ENCODE measurements at regions of chr5 and their contacts with region 1.

Region 1: GRCh38 chr5:139774980-139775661 is 20.5 kb upstream of the PSD2 start:
- DNase-seq: peak; percentile 85
- ATAC-seq: peak; percentile 97
- H3K4me3 Mint-ChIP-seq: no peak overlapping the region
- H3K27ac Mint-ChIP-seq: no peak overlapping the region
- H3K4me1 Mint-ChIP-seq: peaks cover 4% of the 10 kb centered on the region
- H3K27me3 Mint-ChIP-seq: peaks cover 15% of the 10 kb centered on the region

Region 2: DNA sequence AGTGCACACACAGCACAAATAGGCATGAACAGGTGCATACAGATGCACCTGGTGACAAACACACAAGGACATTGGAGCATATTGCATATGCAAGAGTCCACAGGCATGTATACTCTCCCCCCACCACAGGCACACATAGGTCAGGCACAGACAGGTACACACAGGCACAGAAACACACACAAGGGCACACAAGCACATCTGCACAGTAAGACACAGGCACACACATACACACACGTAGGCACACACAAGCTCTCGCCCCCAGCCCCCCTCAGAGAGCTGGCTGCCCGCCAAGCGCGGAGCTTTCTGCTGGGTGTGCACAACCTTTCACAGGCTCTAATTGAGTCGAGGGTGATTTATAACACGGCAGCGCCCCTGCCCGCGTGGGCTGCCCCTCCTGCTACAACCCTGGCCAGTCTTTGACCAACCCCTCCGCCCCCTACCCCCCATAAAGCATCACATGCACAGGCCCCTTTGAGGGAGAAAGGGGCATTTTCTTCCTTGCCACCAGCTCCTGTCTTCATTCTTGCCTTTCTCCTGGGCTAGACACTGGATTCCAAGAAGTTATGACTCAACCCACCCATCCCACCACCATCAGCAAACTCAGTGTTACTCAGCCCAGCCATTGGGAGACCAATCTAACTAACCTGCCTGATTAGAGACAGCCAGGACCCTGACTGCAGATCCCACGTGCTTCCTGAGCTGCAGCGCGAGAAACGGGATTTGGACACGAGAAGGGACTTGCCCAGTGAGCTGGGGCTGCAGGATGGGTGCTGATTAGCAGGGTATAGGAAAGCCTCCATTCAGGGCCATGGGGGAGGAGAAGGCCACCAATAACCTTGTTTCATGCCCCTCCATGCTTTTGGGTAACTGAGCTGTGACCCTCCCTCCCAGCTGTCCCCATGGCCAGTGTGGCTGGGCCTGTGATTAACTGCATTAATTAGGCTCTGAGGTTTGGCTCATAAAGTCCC is 22.3 kb before region 1 on chr5:
- CTCF ChIA-PET with region 1: interaction called, 12 read pairs
- POLR2A ChIA-PET with region 1: no interaction called
- DNase-seq: no peak
- ATAC-seq: no peak
- H3K4me3 Mint-ChIP-seq: no peak overlapping the region
- H3K27ac Mint-ChIP-seq: no peak overlapping the region
- H3K4me1 Mint-ChIP-seq: peaks cover 18% of the 10 kb centered on the region
- H3K27me3 Mint-ChIP-seq: peaks cover 60% of the 10 kb centered on the region

Region 3: DNA sequence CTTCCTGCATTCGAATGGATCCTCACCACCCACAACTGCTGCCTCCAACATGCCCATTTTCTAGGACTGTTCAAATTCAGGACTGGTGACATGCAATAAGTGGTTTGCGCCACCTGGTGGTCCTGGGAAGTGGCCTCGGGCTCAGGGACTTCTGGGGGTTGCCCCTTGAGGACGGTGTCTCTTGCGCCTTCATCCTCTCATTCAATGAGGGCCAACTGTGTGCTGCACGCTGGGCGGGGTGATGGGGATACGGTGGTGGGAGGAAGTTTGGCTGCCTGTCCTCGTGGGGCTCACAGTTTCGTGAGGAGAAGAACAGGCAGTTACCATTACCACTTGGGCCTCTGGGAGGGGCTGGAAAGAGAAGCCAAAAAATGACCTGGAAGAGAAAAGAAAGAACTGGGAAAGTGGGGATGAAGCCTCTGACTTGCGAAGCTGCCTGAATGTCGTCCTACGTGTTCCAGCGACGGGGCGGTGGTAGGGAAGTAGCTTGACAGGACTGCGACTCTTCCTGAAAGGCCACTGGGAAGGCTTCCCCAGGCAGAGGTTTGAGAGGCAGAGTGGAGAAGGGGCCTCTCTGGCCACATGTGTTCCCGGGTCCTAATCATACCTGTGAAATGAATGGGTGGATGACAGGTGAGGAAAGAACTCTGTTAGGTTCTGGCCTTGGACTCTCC is 69.5 kb after region 1 on chr5:
- CTCF ChIA-PET with region 1: interaction called, 12 read pairs
- POLR2A ChIA-PET with region 1: no interaction called
- DNase-seq: peak; percentile 81
- ATAC-seq: peak; percentile 29
- H3K4me3 Mint-ChIP-seq: no peak overlapping the region
- H3K27ac Mint-ChIP-seq: no peak overlapping the region
- H3K4me1 Mint-ChIP-seq: peaks cover 6% of the 10 kb centered on the region
- H3K27me3 Mint-ChIP-seq: peaks cover 34% of the 10 kb centered on the region